ENCODE measurements at regions of chr12 and their contacts with region 1.

Region 1: DNA sequence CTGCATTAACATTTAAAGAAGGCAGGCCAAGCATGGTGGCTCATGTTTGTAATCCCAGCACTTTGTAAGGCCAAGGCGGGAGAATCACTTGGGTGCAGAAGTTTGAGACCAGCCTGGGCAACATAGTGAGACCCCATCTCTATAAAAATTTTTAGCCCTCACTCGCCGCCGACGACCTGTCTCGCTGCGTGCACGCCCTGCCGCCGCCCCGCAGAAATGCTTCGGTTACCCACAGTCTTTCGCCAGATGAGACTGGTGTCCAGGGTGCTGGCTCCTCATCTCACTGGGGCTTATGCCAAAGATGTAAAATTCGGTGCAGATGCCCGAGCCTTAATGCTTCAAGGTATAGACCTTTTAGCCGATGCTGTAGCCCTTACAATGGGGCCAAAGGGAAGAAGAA is 10.8 kb upstream of the RBMS2 start:
- DNase-seq: no peak
- H3K4me3 ChIP-seq: no peak overlapping the region
- H3K27ac ChIP-seq: no peak overlapping the region
- H3K4me1 ChIP-seq: no peaks in the 10 kb centered on the region
- H3K27me3 ChIP-seq: no peaks in the 10 kb centered on the region
- CTCF ChIP-seq: no peak
- POLR2A ChIP-seq: no peak

Region 2: DNA sequence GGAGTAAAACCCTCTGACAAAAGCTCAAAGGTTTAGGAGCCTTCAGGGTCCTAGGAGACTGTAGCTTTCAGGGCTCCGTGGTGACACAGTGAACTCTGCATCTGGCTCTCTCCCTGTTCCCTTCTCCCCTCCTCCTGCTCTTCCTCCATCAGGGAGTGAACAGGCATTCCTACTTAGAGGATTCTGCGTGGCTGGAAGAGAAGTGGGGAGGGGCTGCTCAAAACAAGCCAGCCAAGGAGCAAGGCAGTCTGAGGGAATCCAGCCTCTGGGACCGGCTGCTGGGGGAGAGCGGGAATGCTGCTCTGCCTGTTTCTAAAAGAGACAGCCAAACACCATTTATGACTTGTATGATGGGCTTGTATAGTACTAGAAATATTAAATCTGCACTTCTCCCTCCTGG is 60.3 kb after region 1 on chr12:
- intact Hi-C with region 1: loop called (anchors 5 kb)
- DNase-seq: no peak
- H3K4me3 ChIP-seq: no peak overlapping the region
- H3K27ac ChIP-seq: peak overlapping the region in 2 of 5 donors; percentile 26 to 35
- H3K4me1 ChIP-seq: peaks cover 3 to 9% of the 10 kb centered on the region in 2 donors
- H3K27me3 ChIP-seq: no peaks in the 10 kb centered on the region
- CTCF ChIP-seq: no peak
- POLR2A ChIP-seq: no peak

Region 3: DNA sequence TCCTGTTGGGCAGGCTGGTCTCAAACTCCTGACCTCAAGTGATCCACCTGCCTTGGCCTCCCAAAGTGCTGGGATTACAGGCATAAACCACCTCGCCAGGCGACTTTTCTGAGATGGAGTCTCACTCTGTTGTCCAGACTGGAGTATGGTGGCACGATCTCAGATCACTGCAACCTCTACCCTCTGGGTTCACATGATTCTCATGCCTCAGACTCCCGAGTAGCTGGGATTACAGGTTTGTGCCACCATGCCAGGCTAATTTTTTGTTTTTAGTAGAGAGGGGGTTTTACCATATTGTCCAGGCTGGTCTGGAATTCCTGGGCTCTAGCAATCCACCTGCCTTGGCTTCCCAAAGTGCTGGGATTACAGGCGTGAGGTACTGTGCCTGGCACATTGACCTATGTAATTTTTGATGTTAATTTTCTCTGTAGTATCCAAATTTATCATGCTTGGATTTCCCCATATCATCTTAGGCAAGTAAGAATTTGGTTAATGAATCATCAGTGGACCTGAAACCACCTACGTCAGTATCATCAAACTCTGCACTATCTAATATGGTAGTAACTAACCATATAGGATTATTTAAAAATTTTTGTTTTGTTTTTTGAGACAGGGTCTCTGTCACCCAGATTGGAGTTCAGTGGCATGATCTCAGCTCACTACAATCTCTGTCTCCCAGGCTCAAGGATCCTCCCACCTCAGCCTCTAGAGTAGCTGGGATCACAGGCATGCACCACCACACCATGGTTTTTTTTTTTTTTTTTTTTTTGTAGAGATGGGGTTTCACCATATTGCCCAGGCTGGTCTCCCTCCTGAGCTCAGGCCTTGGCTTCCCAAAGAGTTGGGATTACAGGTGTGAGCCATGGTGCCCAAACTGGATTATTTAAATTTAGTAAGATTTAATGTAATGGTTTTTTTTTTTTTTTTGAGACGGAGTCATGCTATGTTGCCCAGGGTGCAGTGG is 146.9 kb after region 1 on chr12:
- intact Hi-C with region 1: no loop called
- DNase-seq: peak in 4 of 7 donors; percentile 7 to 20 (median 16)
- H3K4me3 ChIP-seq: no peak overlapping the region
- H3K27ac ChIP-seq: no peak overlapping the region
- H3K4me1 ChIP-seq: no peaks in the 10 kb centered on the region
- H3K27me3 ChIP-seq: no peaks in the 10 kb centered on the region
- CTCF ChIP-seq: no peak
- POLR2A ChIP-seq: no peak

Measured in adrenal gland (tissue), 19 donors.